AG04449 (cell line): ENCODE measurements at regions of chrX and their contacts with region 1.

Region 1: GRCh38 chrX:18994738-18995137 is 10.8 kb upstream of the PHKA2 start:
- DNase-seq: peak; percentile 69
- H3K4me3 ChIP-seq: peak overlapping the region; percentile 12; the same call in 1 of the 2 replicates
- CTCF ChIP-seq: no peak

Region 2: GRCh38 chrX:18984381-18985185 is 10.2 kb before region 1 on chrX:
- CTCF ChIA-PET with region 1: interaction called, 12 read pairs
- POLR2A ChIA-PET with region 1: interaction called, 3 read pairs
- DNase-seq: no peak
- H3K4me3 ChIP-seq: peak overlapping the region; percentile 66
- CTCF ChIP-seq: peak; percentile 39

Region 3: GRCh38 chrX:19403696-19404095 is 409.0 kb after region 1 on chrX:
- CTCF ChIA-PET with region 1: no interaction called
- POLR2A ChIA-PET with region 1: no interaction called
- DNase-seq: no peak
- H3K4me3 ChIP-seq: no peak overlapping the region
- CTCF ChIP-seq: no peak